Activated T-helper 2 cell treated with anti-CD3 and anti-CD28 coated beads, Interferon-gamma antibody, Interleukin-2, Interleukin-4, amounts not matched to agents 10 μg/mL and 5 μg/mL and 100 μg/mL, durations not matched to agents 14 hours and 24 hours and 36 hours (primary cell): ENCODE measurements at regions of chr16 and their contacts with region 1.

Region 1: GRCh38 chr16:29805378-29806098 is 791 bp upstream of the MAZ start:
- DNase-seq: peak; percentile 97
- H3K4me3 Mint-ChIP-seq: peak overlapping the region; percentile 100
- H3K27ac Mint-ChIP-seq: peak overlapping the region; percentile 100
- H3K4me1 Mint-ChIP-seq: peaks cover 31% of the 10 kb centered on the region
- H3K27me3 Mint-ChIP-seq: no peaks in the 10 kb centered on the region

Region 2: GRCh38 chr16:29745853-29746345 is 59.6 kb before region 1 on chr16 and contains the start of gene C16orf54:
- intact Hi-C with region 1: loop called (anchors 5 kb)
- DNase-seq: peak; percentile 92
- H3K4me3 Mint-ChIP-seq: peak within 1 kb of the TSS; percentile 98
- H3K27ac Mint-ChIP-seq: peak within 1 kb of the TSS; percentile 94
- H3K4me1 Mint-ChIP-seq: peaks cover 41% of the 10 kb centered on the region
- H3K27me3 Mint-ChIP-seq: no peaks in the 10 kb centered on the region
- total RNA-seq, gene C16orf54: 18.0 and 18.5 TPM in 2 replicates

Region 3: GRCh38 chr16:29815793-29816693 is 10.5 kb after region 1 on chr16 and contains the start of gene PAGR1:
- intact Hi-C with region 1: loop called (anchors 1 kb)
- DNase-seq: peak; percentile 99
- H3K4me3 Mint-ChIP-seq: peak within 1 kb of the TSS; percentile 89
- H3K27ac Mint-ChIP-seq: peak within 1 kb of the TSS; percentile 94
- H3K4me1 Mint-ChIP-seq: peaks cover 46% of the 10 kb centered on the region
- H3K27me3 Mint-ChIP-seq: peaks cover 1% of the 10 kb centered on the region
- total RNA-seq, gene PAGR1: 27.6 and 29.5 TPM in 2 replicates

Region 4: DNA sequence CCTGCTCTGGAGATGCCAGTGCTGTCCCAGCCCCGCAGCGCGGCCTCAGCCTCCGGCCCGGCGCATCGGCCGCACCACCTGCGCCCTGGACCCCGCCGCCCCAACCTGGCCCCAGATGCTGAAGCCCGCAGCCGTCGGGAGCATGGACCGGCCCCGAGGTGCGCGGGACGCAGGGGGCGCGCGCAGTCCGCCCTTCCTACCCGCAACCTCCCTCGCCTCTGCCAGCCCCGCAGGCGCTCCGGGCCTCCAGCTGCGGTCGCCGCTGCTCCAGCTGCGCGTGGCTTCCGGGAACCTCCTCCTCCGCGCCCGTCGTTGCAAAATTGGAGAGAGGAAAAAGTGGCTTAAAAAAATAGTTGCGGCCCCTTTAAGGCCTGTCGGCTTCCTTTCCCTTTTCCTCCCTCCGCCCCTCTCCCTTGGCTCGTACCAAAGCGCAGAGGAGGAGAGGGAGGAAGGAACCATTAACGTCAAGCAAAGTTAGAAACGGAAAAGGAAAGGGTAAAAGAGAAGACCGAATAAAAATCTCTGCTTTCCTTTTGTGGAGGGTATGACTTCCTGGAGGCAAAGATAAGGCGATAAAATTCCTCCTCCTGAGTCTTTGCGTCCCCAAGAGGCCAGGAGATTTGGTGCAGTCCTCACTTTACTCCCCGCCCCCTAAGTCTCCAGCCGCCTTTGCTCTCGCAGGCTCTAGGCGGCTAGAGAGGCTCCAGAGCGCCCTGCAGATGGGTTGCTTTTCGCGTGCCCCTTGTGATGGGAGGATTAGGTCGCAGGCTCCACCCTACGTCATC is 57.5 kb after region 1 on chr16 and contains the start of gene CDIPT:
- intact Hi-C with region 1: loop called (anchors 2 kb)
- DNase-seq: peak; percentile 90
- H3K4me3 Mint-ChIP-seq: peak within 1 kb of the TSS; percentile 98
- H3K27ac Mint-ChIP-seq: peak within 1 kb of the TSS; percentile 99
- H3K4me1 Mint-ChIP-seq: peaks cover 19% of the 10 kb centered on the region
- H3K27me3 Mint-ChIP-seq: no peaks in the 10 kb centered on the region
- total RNA-seq, gene CDIPT: 64.2 and 66.6 TPM in 2 replicates

Region 5: GRCh38 chr16:30355144-30355894 is 549.8 kb after region 1 on chr16 and contains the start of gene CD2BP2:
- intact Hi-C with region 1: loop called (anchors 5 kb)
- DNase-seq: peak; percentile 84
- H3K4me3 Mint-ChIP-seq: peak within 1 kb of the TSS; percentile 93
- H3K27ac Mint-ChIP-seq: peak within 1 kb of the TSS; percentile 89
- H3K4me1 Mint-ChIP-seq: peaks cover 37% of the 10 kb centered on the region
- H3K27me3 Mint-ChIP-seq: no peaks in the 10 kb centered on the region
- total RNA-seq, gene CD2BP2: 80.1 and 84.5 TPM in 2 replicates